ENCODE measurements at regions of chr18 and their contacts with region 1.

Region 1: GRCh38 chr18:76709659-76710645 is 112.4 kb upstream of the ZNF236 start:
- DNase-seq: peak; percentile 66
- H3K4me3 Mint-ChIP-seq: no peak overlapping the region
- H3K27ac Mint-ChIP-seq: no peak overlapping the region
- H3K4me1 Mint-ChIP-seq: no peaks in the 10 kb centered on the region
- H3K27me3 Mint-ChIP-seq: no peaks in the 10 kb centered on the region

Region 2: DNA sequence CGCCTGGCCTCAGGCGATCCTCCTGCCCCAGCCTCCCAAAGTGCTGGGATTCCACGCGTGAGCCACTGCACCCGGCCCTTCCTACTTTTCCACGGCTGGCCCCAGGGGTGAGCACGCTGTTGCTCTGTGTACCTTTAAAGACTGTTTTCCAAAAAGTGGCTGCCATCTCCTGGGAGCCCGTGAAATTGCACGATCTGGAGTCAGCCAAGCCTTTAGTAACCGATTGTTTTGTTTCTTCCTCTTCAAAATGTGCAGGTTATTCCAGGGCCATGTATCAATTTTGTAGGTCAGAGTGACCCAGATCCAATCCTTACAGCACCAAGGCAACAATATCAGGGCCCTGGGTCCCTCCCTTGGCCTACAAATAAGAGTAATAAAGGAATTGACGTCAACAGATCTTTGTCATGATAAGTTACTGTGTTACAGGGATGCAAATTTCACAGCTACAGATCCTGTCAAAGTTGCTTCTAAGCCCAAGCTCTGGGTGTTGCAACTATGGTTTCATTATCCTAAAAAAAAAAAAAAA is 23.2 kb before region 1 on chr18:
- CTCF ChIA-PET with region 1: interaction called, 7 read pairs
- POLR2A ChIA-PET with region 1: no interaction called
- intact Hi-C with region 1: loop called (anchors 2 kb)
- DNase-seq: peak; percentile 27
- H3K4me3 Mint-ChIP-seq: no peak overlapping the region
- H3K27ac Mint-ChIP-seq: peak overlapping the region; percentile 10
- H3K4me1 Mint-ChIP-seq: peaks cover 16% of the 10 kb centered on the region
- H3K27me3 Mint-ChIP-seq: peaks cover 39% of the 10 kb centered on the region

Region 3: GRCh38 chr18:76721207-76721996 is 11.4 kb after region 1 on chr18:
- CTCF ChIA-PET with region 1: interaction called, 14 read pairs
- POLR2A ChIA-PET with region 1: no interaction called
- intact Hi-C with region 1: no loop called
- DNase-seq: peak; percentile 69
- H3K4me3 Mint-ChIP-seq: peak overlapping the region; percentile 9
- H3K27ac Mint-ChIP-seq: peak overlapping the region; percentile 67
- H3K4me1 Mint-ChIP-seq: peaks cover 40% of the 10 kb centered on the region
- H3K27me3 Mint-ChIP-seq: no peaks in the 10 kb centered on the region